Aorta (tissue), 5 donors: ENCODE measurements at regions of chr9 and their contacts with region 1.

Region 1: GRCh38 chr9:109012876-109013678 is at the start of gene CTNNAL1:
- DNase-seq: peak; percentile 95 to 99
- ATAC-seq: peak; percentile 97
- H3K4me3 ChIP-seq: peak within 1 kb of the TSS; percentile 98 to 100
- H3K27ac ChIP-seq: peak within 1 kb of the TSS; percentile 98
- H3K4me1 ChIP-seq: peaks cover 2 to 6% of the 10 kb centered on the region in 2 donors
- H3K27me3 ChIP-seq: no peaks in the 10 kb centered on the region
- total RNA-seq, gene CTNNAL1: 41.5 to 44.2 TPM

Region 2: GRCh38 chr9:108933718-108934322 is 79.3 kb before region 1 on chr9 and contains the start of gene ELP1:
- intact Hi-C with region 1: loop called in 1 of 2 experiments (anchors 1 kb)
- DNase-seq: peak; percentile 96 to 98
- ATAC-seq: peak; percentile 96
- H3K4me3 ChIP-seq: peak within 1 kb of the TSS; percentile 61 to 62
- H3K27ac ChIP-seq: peak within 1 kb of the TSS in 1 of 2 donors; percentile 79
- H3K4me1 ChIP-seq: peaks cover 0 to 5% of the 10 kb centered on the region in 2 donors
- H3K27me3 ChIP-seq: no peaks in the 10 kb centered on the region
- total RNA-seq, gene ELP1: 13.9 to 19.5 TPM

Region 3: DNA sequence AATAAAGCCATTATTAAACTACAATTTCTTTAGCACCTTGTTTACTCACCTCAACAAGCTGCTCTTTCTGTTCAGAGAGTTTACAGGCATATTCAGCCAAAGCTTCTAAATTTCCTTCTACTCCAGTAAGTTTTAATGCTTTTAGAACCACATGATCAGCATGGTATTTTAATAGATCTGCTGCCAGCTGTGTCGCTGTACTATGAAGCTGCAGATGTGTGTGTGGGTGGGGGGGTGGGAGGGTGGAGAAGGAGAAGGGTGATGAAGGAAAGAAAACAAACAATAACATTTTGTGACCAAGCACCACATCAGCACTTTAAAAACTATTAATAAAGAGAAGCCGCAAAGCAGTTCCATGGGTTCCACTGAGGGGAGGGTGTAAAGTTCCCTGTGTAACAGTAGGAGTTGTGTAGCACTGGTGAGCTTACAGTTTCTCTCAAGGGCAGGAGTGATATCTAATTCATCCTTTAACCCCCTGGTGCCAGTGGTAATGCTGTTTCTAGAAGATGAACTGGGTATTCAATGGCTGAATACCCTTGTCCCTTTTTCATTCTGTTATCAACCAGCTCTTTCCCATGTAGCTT is 40.4 kb before region 1 on chr9:
- intact Hi-C with region 1: no loop called
- DNase-seq: no peak
- ATAC-seq: no peak
- H3K4me3 ChIP-seq: no peak overlapping the region
- H3K27ac ChIP-seq: peak overlapping the region in 1 of 2 donors; percentile 40
- H3K4me1 ChIP-seq: peaks cover 0 to 5% of the 10 kb centered on the region in 2 donors
- H3K27me3 ChIP-seq: no peaks in the 10 kb centered on the region

Region 4: GRCh38 chr9:109048822-109049221 is 35.7 kb after region 1 on chr9:
- intact Hi-C with region 1: loop called in 1 of 2 experiments (anchors 5 kb)
- DNase-seq: no peak
- ATAC-seq: no peak
- H3K4me3 ChIP-seq: no peak overlapping the region
- H3K27ac ChIP-seq: no peak overlapping the region
- H3K4me1 ChIP-seq: peaks cover 2 to 3% of the 10 kb centered on the region in 2 donors
- H3K27me3 ChIP-seq: no peaks in the 10 kb centered on the region

Region 5: DNA sequence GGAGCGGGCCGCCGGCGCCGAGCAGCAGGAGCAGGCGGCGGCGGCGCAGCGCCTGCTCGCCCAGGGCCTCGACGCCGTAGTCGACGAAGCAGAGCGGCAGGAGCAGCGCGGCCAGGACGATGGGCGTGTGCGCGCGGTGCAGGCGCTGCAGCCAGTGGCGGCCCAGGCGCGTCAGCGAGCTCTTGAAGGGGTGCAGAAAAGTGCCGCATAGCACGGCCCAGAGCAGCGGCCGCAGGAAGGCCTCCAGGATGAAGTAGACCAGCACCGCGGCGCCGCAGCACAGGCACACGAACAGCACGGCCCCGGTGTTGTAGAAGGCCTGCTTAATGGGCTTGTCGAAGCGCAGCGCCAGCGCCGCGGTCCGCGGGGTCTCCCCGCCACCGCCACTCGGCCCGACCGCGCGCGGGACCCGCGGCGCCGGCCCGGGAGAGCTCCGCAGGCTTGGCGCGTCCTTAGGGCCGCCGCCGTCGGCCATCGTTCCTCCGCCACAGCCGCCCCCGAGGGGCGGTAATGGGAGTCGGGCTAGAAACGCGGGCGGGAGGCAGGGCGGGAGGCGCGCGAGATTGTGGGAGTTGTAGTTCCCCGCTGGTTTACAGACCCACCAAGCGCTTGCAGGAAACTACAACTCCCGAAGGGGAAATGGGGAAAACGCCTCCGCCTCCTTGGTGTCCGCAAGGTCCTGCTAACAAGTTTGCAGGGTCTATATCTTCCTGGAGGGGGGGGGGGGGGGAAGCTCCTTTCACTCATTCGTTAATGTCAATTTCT is 106.5 kb after region 1 on chr9 and contains the start of gene TMEM245:
- intact Hi-C with region 1: loop called in 1 of 2 experiments (anchors 5 kb)
- DNase-seq: peak; percentile 98
- ATAC-seq: peak; percentile 98
- H3K4me3 ChIP-seq: peak within 1 kb of the TSS; percentile 67 to 93
- H3K27ac ChIP-seq: peak within 1 kb of the TSS; percentile 62 to 71
- H3K4me1 ChIP-seq: peaks cover under 1 to 6% of the 10 kb centered on the region in 2 donors
- H3K27me3 ChIP-seq: no peaks in the 10 kb centered on the region
- total RNA-seq, gene TMEM245: 49.4 to 60.1 TPM